PC-9 (cell line): ENCODE measurements at regions of chr11 and their contacts with region 1.

Region 1: GRCh38 chr11:8964324-8965320 is at the start of gene TMEM9B:
- DNase-seq: peak; percentile 67 to 78
- H3K4me3 ChIP-seq: peak within 1 kb of the TSS; percentile 59
- H3K27ac ChIP-seq: peak within 1 kb of the TSS; percentile 77
- H3K4me1 ChIP-seq: peaks cover 15% of the 10 kb centered on the region
- H3K27me3 ChIP-seq: no peaks in the 10 kb centered on the region
- CTCF ChIP-seq: no peak
- total RNA-seq, gene TMEM9B: 12.0 and 13.4 TPM in 2 replicates

Region 2: DNA sequence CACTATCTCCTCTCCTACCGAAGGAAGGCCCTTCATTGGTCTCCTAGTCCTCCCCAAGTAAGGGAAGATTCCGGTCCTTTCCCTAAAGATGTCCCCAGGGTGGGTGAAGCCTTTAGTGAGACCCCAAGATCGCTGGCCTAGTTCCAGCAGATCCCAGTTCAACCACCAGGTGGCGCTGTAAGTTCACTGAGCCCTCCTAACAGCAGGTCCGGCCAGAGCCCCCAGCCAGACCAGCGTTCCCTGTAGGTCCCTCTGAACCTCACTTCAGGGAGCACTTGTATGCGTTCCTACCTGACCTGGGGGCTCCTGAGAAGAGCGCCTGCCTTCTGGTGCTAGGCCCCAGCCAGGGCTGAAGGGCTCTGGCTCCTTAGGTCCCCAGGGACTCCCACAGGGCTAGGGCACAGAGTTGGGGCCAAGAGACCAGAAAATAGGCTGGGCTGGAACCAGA is 739.0 kb before region 1 on chr11:
- CTCF ChIA-PET with region 1: interaction called, 4 read pairs
- POLR2A ChIA-PET with region 1: no interaction called
- intact Hi-C with region 1: loop called (anchors 10 kb)
- DNase-seq: peak; percentile 41 to 57
- H3K4me3 ChIP-seq: no peak overlapping the region
- H3K27ac ChIP-seq: no peak overlapping the region
- H3K4me1 ChIP-seq: peaks cover 19% of the 10 kb centered on the region; the same call in 1 of the 2 replicates
- H3K27me3 ChIP-seq: no peaks in the 10 kb centered on the region
- CTCF ChIP-seq: peak; percentile 92

Region 3: GRCh38 chr11:8328848-8329330 is 635.7 kb before region 1 on chr11:
- CTCF ChIA-PET with region 1: no interaction called
- POLR2A ChIA-PET with region 1: interaction called, 4 read pairs
- intact Hi-C with region 1: loop called (anchors 2 kb)
- DNase-seq: peak; percentile 82 to 86
- H3K4me3 ChIP-seq: peak overlapping the region; percentile 24; the same call in 1 of the 2 replicates
- H3K27ac ChIP-seq: no peak overlapping the region
- H3K4me1 ChIP-seq: 0 out of 2 replicates have a peak, but pooled peaks cover 8% of the 10 kb centered on the region
- H3K27me3 ChIP-seq: no peaks in the 10 kb centered on the region
- CTCF ChIP-seq: peak; percentile 85

Region 4: GRCh38 chr11:8384199-8384821 is 580.3 kb before region 1 on chr11:
- CTCF ChIA-PET with region 1: no interaction called
- POLR2A ChIA-PET with region 1: no interaction called
- intact Hi-C with region 1: loop called (anchors 10 kb)
- DNase-seq: peak in 1 of 2 experiments; percentile 47
- H3K4me3 ChIP-seq: no peak overlapping the region
- H3K27ac ChIP-seq: no peak overlapping the region
- H3K4me1 ChIP-seq: no peaks in the 10 kb centered on the region
- H3K27me3 ChIP-seq: no peaks in the 10 kb centered on the region
- CTCF ChIP-seq: 0 out of 2 replicates have a peak, but pooled peaks have one; percentile 29

Region 5: GRCh38 chr11:8768625-8769333 is 195.8 kb before region 1 on chr11:
- CTCF ChIA-PET with region 1: no interaction called
- POLR2A ChIA-PET with region 1: interaction called, 3 read pairs
- intact Hi-C with region 1: loop called (anchors 2 kb)
- DNase-seq: peak; percentile 15 to 61
- H3K4me3 ChIP-seq: no peak overlapping the region
- H3K27ac ChIP-seq: peak overlapping the region; percentile 66
- H3K4me1 ChIP-seq: peaks cover 30% of the 10 kb centered on the region
- H3K27me3 ChIP-seq: no peaks in the 10 kb centered on the region
- CTCF ChIP-seq: peak; percentile 28; the same call in 1 of the 2 replicates

Region 6: GRCh38 chr11:8917157-8917825 is 47.3 kb before region 1 on chr11:
- CTCF ChIA-PET with region 1: interaction called, 4 read pairs
- POLR2A ChIA-PET with region 1: no interaction called
- intact Hi-C with region 1: loop called (anchors 2 kb)
- DNase-seq: peak in 1 of 2 experiments; percentile 47
- H3K4me3 ChIP-seq: no peak overlapping the region
- H3K27ac ChIP-seq: no peak overlapping the region
- H3K4me1 ChIP-seq: peaks cover 2% of the 10 kb centered on the region; the same call in 1 of the 2 replicates
- H3K27me3 ChIP-seq: no peaks in the 10 kb centered on the region
- CTCF ChIP-seq: no peak

Region 7: GRCh38 chr11:9118277-9118676 is 153.7 kb after region 1 on chr11:
- CTCF ChIA-PET with region 1: no interaction called
- POLR2A ChIA-PET with region 1: no interaction called
- intact Hi-C with region 1: no loop called
- DNase-seq: no peak
- H3K4me3 ChIP-seq: no peak overlapping the region
- H3K27ac ChIP-seq: no peak overlapping the region
- H3K4me1 ChIP-seq: no peaks in the 10 kb centered on the region
- H3K27me3 ChIP-seq: no peaks in the 10 kb centered on the region
- CTCF ChIP-seq: no peak

Region 8: DNA sequence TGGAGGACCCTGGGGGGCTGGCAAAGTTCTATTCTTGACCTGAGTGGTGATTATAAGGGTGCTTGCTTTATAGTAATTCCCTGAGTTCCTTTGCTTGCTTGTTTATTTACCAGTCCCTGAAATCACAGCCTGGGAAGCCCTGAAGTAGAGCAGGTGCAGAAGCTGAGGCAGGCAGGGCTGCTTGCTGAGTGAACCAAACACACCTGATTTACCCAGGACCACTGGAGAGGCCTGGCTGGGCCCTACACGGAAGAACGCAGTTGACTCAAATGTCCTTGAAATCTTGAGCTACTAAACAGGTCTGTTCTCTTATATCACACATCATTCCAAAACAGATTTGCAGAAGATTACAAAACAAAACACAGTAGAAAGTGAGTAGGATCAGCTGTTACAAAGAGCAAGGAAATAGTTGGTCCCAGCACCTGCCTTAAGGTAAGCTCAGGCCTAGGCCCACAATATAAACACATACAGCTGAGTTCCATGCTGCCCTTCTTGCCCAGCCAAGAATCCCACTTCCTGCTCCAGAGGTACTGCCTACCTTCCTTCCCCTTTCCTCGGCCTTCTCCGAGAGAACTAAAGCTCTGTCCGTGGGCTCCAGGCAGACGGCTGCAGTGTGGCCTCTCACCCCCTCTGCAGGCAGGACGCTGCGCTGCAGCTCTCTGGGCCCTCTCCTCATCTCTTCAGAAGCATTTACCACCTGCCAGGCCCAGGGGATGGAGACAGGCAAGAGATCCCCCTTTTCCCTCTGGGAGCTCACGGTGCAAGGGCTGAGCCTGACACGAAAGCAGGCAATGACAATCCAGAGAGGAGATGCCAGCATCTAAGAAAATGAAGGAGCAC is 172.9 kb after region 1 on chr11:
- CTCF ChIA-PET with region 1: no interaction called
- POLR2A ChIA-PET with region 1: no interaction called
- intact Hi-C with region 1: loop called (anchors 1 kb)
- DNase-seq: peak; percentile 56 to 71
- H3K4me3 ChIP-seq: no peak overlapping the region
- H3K27ac ChIP-seq: no peak overlapping the region
- H3K4me1 ChIP-seq: peaks cover 40% of the 10 kb centered on the region
- H3K27me3 ChIP-seq: no peaks in the 10 kb centered on the region
- CTCF ChIP-seq: peak; percentile 92